CD8-positive, alpha-beta T cell (primary cell): ENCODE measurements at regions of chr1 and their contacts with region 1.

Region 1: DNA sequence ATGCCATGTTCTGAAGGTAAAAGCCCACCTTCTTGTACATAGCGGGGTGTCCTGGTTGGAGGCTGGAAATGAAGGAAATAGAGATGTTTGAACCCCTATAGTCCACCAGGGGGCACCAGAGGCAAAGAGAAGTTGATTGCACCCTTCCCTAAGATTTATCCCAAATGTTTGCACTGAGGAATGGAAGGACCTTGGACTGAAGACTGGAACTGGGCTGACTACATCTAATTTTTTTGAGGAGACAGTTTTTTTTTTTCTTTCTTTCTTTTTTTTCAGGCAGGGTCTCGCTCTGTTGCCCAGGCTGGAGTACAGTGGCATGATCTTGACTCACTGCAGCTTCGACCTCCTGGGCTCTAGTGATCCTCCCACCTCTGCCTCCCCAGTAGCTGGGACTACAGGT is 55.3 kb upstream of the EIF4G3 start:
- DNase-seq: peak in 4 of 9 experiments; percentile 32 to 69 (median 52)
- ATAC-seq: peak; percentile 73
- H3K4me3 ChIP-seq: no peak overlapping the region
- H3K4me3 Mint-ChIP-seq: no peak overlapping the region
- H3K27ac ChIP-seq: no peak overlapping the region
- H3K27ac Mint-ChIP-seq: no peak overlapping the region
- H3K4me1 ChIP-seq: no peaks in the 10 kb centered on the region
- H3K4me1 Mint-ChIP-seq: no peaks in the 10 kb centered on the region
- H3K27me3 ChIP-seq: no peaks in the 10 kb centered on the region
- H3K27me3 Mint-ChIP-seq: no peaks in the 10 kb centered on the region
- CTCF ChIP-seq: peak; percentile 90

Region 2: DNA sequence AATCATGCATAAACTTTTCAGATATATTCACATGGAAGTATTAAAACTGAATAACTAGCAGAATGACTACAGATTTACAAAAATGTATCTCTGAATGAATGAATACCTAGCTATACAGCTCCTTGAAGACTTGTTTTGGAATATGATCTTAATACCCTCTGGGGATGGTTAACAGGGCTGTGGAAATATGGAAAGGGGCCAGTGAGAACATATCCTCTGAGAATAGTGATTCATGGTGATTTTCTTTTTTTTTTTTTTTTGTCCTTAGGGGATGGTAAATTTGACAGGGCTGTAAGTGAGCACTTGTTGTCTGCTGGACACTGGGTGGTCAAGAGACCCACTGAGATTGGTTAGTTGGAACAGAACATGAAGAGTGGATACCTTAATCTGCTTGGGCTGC is 364.2 kb before region 1 on chr1:
- CTCF ChIA-PET with region 1: no interaction called
- POLR2A ChIA-PET with region 1: no interaction called
- intact Hi-C with region 1: no loop called
- DNase-seq: no peak
- ATAC-seq: no peak
- H3K4me3 ChIP-seq: no peak overlapping the region
- H3K4me3 Mint-ChIP-seq: no peak overlapping the region
- H3K27ac ChIP-seq: no peak overlapping the region
- H3K27ac Mint-ChIP-seq: no peak overlapping the region
- H3K4me1 ChIP-seq: no peaks in the 10 kb centered on the region
- H3K4me1 Mint-ChIP-seq: no peaks in the 10 kb centered on the region
- H3K27me3 ChIP-seq: no peaks in the 10 kb centered on the region
- H3K27me3 Mint-ChIP-seq: no peaks in the 10 kb centered on the region
- CTCF ChIP-seq: no peak

Region 3: DNA sequence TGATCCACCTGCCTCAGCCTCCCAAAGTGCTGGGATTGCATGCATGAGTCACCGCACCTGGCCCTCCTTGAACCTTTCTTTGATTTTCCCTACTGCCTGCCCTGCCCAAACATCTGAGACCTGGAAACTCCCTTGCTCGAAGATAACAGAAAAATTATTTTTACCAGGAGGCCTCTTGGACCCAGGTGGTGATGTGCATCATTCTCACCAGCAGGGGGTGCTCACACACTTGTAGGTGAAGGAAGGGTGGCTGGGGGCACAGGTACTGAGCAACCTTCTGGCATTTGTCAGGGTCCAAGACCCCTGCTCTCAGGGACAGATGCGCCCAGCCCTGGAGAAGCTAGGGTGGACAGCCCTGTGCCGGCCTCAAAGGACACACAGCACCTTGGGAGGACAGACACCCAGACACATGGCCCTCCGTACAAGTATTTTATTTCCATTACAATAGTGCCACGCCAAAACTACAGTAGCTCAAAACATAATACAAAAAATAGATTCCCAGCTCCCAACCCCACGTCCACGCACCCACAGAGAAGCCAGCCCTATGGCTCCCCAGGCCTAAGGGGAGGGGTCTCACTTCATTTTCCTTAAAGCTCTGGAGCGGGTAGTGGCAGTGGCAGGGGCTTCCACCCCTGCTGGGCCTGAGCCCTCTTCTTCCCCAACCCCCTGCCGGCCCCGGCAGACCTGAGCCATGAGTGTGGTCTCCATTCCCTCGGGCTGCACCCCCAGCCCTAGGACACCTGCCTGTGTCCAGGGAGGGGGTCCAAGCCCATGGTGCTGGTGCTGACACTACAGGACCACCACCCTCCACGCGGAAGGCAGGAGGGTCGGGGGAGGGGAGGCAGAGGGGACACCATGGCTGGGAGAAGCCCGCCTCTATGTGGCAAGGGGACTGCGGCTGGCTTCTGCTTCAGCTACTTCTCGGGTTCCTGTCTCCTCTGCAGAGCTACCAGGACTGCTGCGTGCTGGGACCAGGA is 14.9 kb before region 1 on chr1:
- CTCF ChIA-PET with region 1: interaction called, 23 read pairs
- POLR2A ChIA-PET with region 1: no interaction called
- intact Hi-C with region 1: no loop called
- DNase-seq: peak; percentile 26 to 79 (median 70)
- ATAC-seq: peak; percentile 78
- H3K4me3 ChIP-seq: no peak overlapping the region
- H3K4me3 Mint-ChIP-seq: no peak overlapping the region
- H3K27ac ChIP-seq: no peak overlapping the region
- H3K27ac Mint-ChIP-seq: no peak overlapping the region
- H3K4me1 ChIP-seq: no peaks in the 10 kb centered on the region
- H3K4me1 Mint-ChIP-seq: peaks cover 2% of the 10 kb centered on the region
- H3K27me3 ChIP-seq: no peaks in the 10 kb centered on the region
- H3K27me3 Mint-ChIP-seq: no peaks in the 10 kb centered on the region
- CTCF ChIP-seq: peak; percentile 75

Region 4: GRCh38 chr1:21244986-21245687 is 13.1 kb after region 1 on chr1:
- CTCF ChIA-PET with region 1: interaction called, 21 read pairs
- POLR2A ChIA-PET with region 1: no interaction called
- intact Hi-C with region 1: no loop called
- DNase-seq: no peak
- ATAC-seq: no peak
- H3K4me3 ChIP-seq: no peak overlapping the region
- H3K4me3 Mint-ChIP-seq: no peak overlapping the region
- H3K27ac ChIP-seq: no peak overlapping the region
- H3K27ac Mint-ChIP-seq: no peak overlapping the region
- H3K4me1 ChIP-seq: no peaks in the 10 kb centered on the region
- H3K4me1 Mint-ChIP-seq: peaks cover 2% of the 10 kb centered on the region
- H3K27me3 ChIP-seq: no peaks in the 10 kb centered on the region
- H3K27me3 Mint-ChIP-seq: no peaks in the 10 kb centered on the region
- CTCF ChIP-seq: no peak

Region 5: GRCh38 chr1:21468599-21468998 is 236.6 kb after region 1 on chr1:
- CTCF ChIA-PET with region 1: no interaction called
- POLR2A ChIA-PET with region 1: no interaction called
- intact Hi-C with region 1: loop called in 1 of 2 experiments (anchors 2 kb)
- DNase-seq: peak in 3 of 9 experiments; percentile 17 to 34 (median 28)
- ATAC-seq: no peak
- H3K4me3 ChIP-seq: no peak overlapping the region
- H3K4me3 Mint-ChIP-seq: no peak overlapping the region
- H3K27ac ChIP-seq: no peak overlapping the region
- H3K27ac Mint-ChIP-seq: no peak overlapping the region
- H3K4me1 ChIP-seq: no peaks in the 10 kb centered on the region
- H3K4me1 Mint-ChIP-seq: peaks cover 5% of the 10 kb centered on the region
- H3K27me3 ChIP-seq: no peaks in the 10 kb centered on the region
- H3K27me3 Mint-ChIP-seq: no peaks in the 10 kb centered on the region
- CTCF ChIP-seq: peak; percentile 31

Region 6: DNA sequence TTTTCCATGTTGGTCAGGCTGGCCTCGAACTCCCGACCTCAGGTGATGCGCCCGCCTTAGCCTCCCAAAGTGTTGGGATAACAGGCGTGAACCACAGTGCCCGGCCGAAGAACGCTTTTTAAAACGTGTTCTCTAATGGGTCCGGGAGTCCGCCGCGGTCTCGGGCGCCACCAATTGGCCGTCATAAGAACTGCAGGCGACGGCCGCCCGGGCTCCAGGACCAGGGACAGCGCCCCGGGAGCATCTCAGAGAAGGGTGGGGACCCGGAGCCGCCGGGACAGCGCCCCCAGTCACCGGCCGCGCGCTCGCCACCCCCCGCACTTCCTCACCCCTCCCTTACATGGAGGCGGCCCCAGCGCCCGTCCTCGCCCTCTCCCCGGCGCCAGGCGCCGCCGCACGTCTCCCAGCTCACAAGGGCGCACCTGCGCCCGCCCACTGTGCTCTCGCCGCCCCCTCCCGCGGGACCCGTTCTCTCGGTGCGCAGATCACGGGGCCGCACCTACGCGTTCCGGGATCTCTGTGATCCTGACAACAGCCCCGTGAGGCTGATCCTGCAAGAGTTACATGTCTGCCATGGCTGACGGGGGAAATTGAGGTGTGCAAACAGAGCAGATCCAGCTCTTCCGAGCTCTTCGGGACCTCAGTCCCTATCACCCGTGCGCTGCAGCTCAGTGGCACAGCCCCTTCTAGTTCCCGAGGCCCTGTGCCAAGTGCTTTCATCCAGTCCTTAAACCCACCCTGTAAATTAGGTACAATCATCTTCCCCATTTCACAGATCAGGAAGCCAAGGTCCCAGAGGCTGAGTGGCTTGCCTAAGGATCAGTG is 427.3 kb after region 1 on chr1:
- CTCF ChIA-PET with region 1: no interaction called
- POLR2A ChIA-PET with region 1: no interaction called
- intact Hi-C with region 1: loop called (anchors 2 to 5 kb)
- DNase-seq: peak; percentile 65 to 90 (median 84)
- ATAC-seq: peak; percentile 99
- H3K4me3 ChIP-seq: peak overlapping the region; percentile 8 to 10
- H3K4me3 Mint-ChIP-seq: peak overlapping the region; percentile 32
- H3K27ac ChIP-seq: no peak overlapping the region
- H3K27ac Mint-ChIP-seq: no peak overlapping the region
- H3K4me1 ChIP-seq: peaks cover 8% of the 10 kb centered on the region
- H3K4me1 Mint-ChIP-seq: peaks cover 5% of the 10 kb centered on the region
- H3K27me3 ChIP-seq: peaks cover 5 to 10% of the 10 kb centered on the region in 2 experiments
- H3K27me3 Mint-ChIP-seq: peaks cover 17% of the 10 kb centered on the region
- CTCF ChIP-seq: peak; percentile 93

Region 7: GRCh38 chr1:22416555-22417454 is 1184.8 kb after region 1 on chr1:
- CTCF ChIA-PET with region 1: no interaction called
- POLR2A ChIA-PET with region 1: no interaction called
- intact Hi-C with region 1: loop called in 1 of 2 experiments (anchors 10 kb)
- DNase-seq: peak; percentile 42 to 83 (median 75)
- ATAC-seq: peak; percentile 87
- H3K4me3 ChIP-seq: no peak overlapping the region
- H3K4me3 Mint-ChIP-seq: no peak overlapping the region
- H3K27ac ChIP-seq: no peak overlapping the region
- H3K27ac Mint-ChIP-seq: no peak overlapping the region
- H3K4me1 ChIP-seq: peaks cover 5% of the 10 kb centered on the region
- H3K4me1 Mint-ChIP-seq: peaks cover 7% of the 10 kb centered on the region
- H3K27me3 ChIP-seq: peaks cover 4 to 9% of the 10 kb centered on the region in 2 experiments
- H3K27me3 Mint-ChIP-seq: peaks cover 41% of the 10 kb centered on the region
- CTCF ChIP-seq: peak; percentile 73